CD8-positive, alpha-beta T cell (primary cell): ENCODE measurements at regions of chr2 and their contacts with region 1.

Region 1: GRCh38 chr2:39913648-39914461 is 134.8 kb upstream of the THUMPD2 start:
- DNase-seq: peak in 2 of 9 experiments; percentile 33 to 49
- ATAC-seq: no peak
- H3K4me3 ChIP-seq: no peak overlapping the region
- H3K4me3 Mint-ChIP-seq: no peak overlapping the region
- H3K27ac ChIP-seq: no peak overlapping the region
- H3K27ac Mint-ChIP-seq: no peak overlapping the region
- H3K4me1 ChIP-seq: no peaks in the 10 kb centered on the region
- H3K4me1 Mint-ChIP-seq: no peaks in the 10 kb centered on the region
- H3K27me3 ChIP-seq: no peaks in the 10 kb centered on the region
- H3K27me3 Mint-ChIP-seq: peaks cover 2% of the 10 kb centered on the region
- CTCF ChIP-seq: peak; percentile 64

Region 2: GRCh38 chr2:40554668-40555285 is 640.9 kb after region 1 on chr2:
- CTCF ChIA-PET with region 1: interaction called, 3 read pairs
- POLR2A ChIA-PET with region 1: no interaction called
- intact Hi-C with region 1: loop called (anchors 5 kb)
- DNase-seq: peak in 3 of 9 experiments; percentile 6 to 20 (median 10)
- ATAC-seq: no peak
- H3K4me3 ChIP-seq: no peak overlapping the region
- H3K4me3 Mint-ChIP-seq: no peak overlapping the region
- H3K27ac ChIP-seq: no peak overlapping the region
- H3K27ac Mint-ChIP-seq: no peak overlapping the region
- H3K4me1 ChIP-seq: no peaks in the 10 kb centered on the region
- H3K4me1 Mint-ChIP-seq: no peaks in the 10 kb centered on the region
- H3K27me3 ChIP-seq: no peaks in the 10 kb centered on the region
- H3K27me3 Mint-ChIP-seq: peaks cover 2% of the 10 kb centered on the region
- CTCF ChIP-seq: no peak

Region 3: GRCh38 chr2:41698678-41699422 is 1785.0 kb after region 1 on chr2:
- CTCF ChIA-PET with region 1: interaction called, 4 read pairs
- POLR2A ChIA-PET with region 1: no interaction called
- intact Hi-C with region 1: loop called (anchors 2 to 10 kb)
- DNase-seq: peak in 4 of 9 experiments; percentile 7 to 27 (median 14)
- ATAC-seq: no peak
- H3K4me3 ChIP-seq: no peak overlapping the region
- H3K4me3 Mint-ChIP-seq: no peak overlapping the region
- H3K27ac ChIP-seq: no peak overlapping the region
- H3K27ac Mint-ChIP-seq: no peak overlapping the region
- H3K4me1 ChIP-seq: peaks cover 5% of the 10 kb centered on the region
- H3K4me1 Mint-ChIP-seq: peaks cover 7% of the 10 kb centered on the region
- H3K27me3 ChIP-seq: no peaks in the 10 kb centered on the region
- H3K27me3 Mint-ChIP-seq: peaks cover 2% of the 10 kb centered on the region
- CTCF ChIP-seq: no peak